ENCODE measurements at regions of chr14 and their contacts with region 1.

Region 1: DNA sequence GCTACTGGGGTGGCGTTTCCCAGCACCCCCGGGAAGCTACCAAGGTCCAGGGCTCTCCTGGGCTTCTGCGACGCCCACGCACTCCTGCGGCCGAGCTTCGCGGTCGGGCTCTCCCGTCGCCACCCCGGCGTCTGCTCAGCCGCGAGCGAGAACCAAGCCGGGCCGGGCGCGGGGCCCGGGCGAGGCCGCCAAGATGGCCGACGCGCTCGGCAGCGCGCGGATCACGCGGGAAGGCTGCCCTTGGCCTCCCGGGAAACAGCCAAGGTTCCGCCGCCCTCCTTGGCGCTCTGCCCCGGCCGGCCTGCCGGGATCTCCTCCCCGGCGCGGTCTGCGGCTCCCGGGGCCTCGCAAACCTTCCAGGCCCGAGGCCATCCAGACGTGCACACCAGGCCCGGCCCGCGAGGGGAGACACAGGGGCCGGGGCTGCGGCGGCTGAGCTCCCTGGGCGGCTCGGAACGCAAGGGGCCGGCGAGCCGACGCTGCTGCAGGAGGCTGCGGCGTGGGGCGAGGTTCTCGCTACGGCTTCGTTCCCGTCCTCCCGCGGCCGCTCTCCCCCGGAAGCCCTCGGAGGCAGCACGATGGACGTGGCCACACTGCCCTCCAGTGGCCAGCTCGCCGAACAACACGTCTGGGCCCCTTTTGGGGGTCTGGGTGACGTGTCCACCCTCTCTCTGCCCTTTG is 23.5 kb upstream of the ZFP36L1 start:
- DNase-seq: peak; percentile 93
- ATAC-seq: peak; percentile 86
- H3K4me3 Mint-ChIP-seq: peak overlapping the region; percentile 66
- H3K27ac Mint-ChIP-seq: peak overlapping the region; percentile 90
- H3K4me1 Mint-ChIP-seq: peaks cover 69% of the 10 kb centered on the region
- H3K27me3 Mint-ChIP-seq: no peaks in the 10 kb centered on the region

Region 2: DNA sequence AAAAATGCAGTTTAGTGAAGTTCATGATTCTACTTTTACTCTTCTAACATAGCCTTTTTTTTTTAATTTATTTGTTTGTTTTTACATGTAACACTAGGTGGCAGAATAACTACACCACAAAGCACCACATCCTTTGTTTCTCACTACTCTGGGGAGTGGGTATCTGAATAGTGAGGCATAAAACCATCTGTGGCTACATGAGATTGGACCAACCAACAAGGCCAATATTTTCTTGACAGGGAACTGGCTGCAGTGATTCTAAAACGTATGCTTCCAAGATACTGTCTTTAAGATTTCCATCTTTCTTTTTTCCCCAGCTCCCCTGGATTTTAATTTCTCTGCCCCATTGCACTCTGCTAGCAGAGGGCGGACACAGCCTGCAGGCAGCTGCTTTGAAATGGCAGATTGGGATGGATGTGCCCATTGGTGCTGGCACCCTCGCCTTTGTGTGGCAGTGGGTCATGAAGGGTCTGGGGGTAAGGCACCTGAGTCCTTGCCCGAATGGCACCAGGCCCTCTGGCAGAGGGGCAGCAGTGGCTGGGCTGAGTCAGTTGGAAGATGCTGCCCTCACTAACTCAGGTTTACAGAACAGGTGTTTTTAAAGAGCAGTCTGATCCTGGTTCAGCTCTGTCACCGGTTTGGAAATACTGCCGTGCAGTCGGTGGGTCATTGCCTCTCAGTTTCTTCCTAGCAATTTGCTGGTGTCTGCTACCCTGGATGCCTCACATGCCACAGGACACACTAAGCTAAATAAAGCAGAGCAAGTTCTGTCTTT is 567.7 kb before region 1 on chr14:
- CTCF ChIA-PET with region 1: interaction called, 138 read pairs
- POLR2A ChIA-PET with region 1: interaction called, 3 read pairs
- DNase-seq: no peak
- ATAC-seq: peak; percentile 53
- H3K4me3 Mint-ChIP-seq: no peak overlapping the region
- H3K27ac Mint-ChIP-seq: no peak overlapping the region
- H3K4me1 Mint-ChIP-seq: peaks cover 25% of the 10 kb centered on the region
- H3K27me3 Mint-ChIP-seq: no peaks in the 10 kb centered on the region

Region 3: GRCh38 chr14:68685419-68686204 is 130.8 kb before region 1 on chr14:
- CTCF ChIA-PET with region 1: interaction called, 10 read pairs
- POLR2A ChIA-PET with region 1: interaction called, 11 read pairs
- DNase-seq: peak; percentile 88
- ATAC-seq: peak; percentile 89
- H3K4me3 Mint-ChIP-seq: peak overlapping the region; percentile 22
- H3K27ac Mint-ChIP-seq: peak overlapping the region; percentile 88
- H3K4me1 Mint-ChIP-seq: peaks cover 55% of the 10 kb centered on the region
- H3K27me3 Mint-ChIP-seq: peaks cover 6% of the 10 kb centered on the region

Region 4: GRCh38 chr14:68780358-68781160 is 35.8 kb before region 1 on chr14:
- CTCF ChIA-PET with region 1: interaction called, 246 read pairs
- POLR2A ChIA-PET with region 1: interaction called, 314 read pairs
- DNase-seq: peak; percentile 73
- ATAC-seq: peak; percentile 51
- H3K4me3 Mint-ChIP-seq: peak overlapping the region; percentile 74
- H3K27ac Mint-ChIP-seq: peak overlapping the region; percentile 90
- H3K4me1 Mint-ChIP-seq: peaks cover 74% of the 10 kb centered on the region
- H3K27me3 Mint-ChIP-seq: no peaks in the 10 kb centered on the region

Measured in activated CD8-positive, alpha-beta T cell treated with anti-CD3 and anti-CD28 coated beads, Interleukin-2, amount 10 ng/mL, durations not matched to agents 7 days and 5 days (primary cell).